ENCODE measurements at regions of chr2 and their contacts with region 1.

Region 1: DNA sequence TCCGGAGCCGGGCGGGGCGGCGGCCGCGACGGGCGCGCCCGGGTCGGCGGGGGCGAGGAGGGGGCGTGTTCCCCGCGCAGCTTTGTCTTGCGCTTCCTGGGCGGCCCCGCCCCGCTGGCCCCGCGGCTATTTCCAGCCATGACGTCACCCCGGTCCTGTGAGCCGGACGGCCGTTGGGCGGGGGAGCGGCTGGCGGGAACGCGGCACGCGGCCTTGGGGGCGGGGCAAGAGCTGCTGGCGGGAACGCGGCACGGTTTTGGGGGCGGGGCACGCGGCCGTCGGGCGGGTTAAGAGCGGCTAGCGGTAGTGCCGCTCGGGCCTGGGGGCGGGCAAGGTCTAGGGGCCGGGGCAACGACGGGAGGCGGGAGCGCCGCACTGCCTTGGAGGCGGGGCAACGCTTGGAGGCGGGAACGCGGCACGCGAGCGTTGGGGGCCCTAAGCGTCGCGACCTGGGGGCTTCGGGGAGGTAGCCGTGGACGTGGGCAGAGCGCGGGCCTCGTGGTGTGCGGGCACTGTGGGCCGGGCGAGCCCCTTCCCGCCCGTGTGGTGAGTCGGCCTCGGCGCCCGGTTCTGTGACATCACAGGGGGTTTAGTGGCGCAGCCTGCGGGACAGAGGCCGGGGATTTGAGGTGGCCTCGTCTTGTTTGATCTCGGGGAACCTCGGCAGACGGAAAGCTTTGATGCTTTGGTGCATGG is 704 bp downstream of the KLF11 start:
- DNase-seq: peak; percentile 72 to 96 (median 94)
- ATAC-seq: peak; percentile 66
- H3K4me3 ChIP-seq: peak overlapping the region; percentile 40 to 47
- H3K4me3 Mint-ChIP-seq: peak overlapping the region; percentile 77
- H3K27ac ChIP-seq: peak overlapping the region; percentile 67 to 74
- H3K27ac Mint-ChIP-seq: peak overlapping the region; percentile 90
- H3K4me1 ChIP-seq: peaks cover 18% of the 10 kb centered on the region
- H3K4me1 Mint-ChIP-seq: peaks cover 21% of the 10 kb centered on the region
- H3K27me3 ChIP-seq: no peaks in the 10 kb centered on the region
- H3K27me3 Mint-ChIP-seq: no peaks in the 10 kb centered on the region
- CTCF ChIP-seq: no peak

Region 2: DNA sequence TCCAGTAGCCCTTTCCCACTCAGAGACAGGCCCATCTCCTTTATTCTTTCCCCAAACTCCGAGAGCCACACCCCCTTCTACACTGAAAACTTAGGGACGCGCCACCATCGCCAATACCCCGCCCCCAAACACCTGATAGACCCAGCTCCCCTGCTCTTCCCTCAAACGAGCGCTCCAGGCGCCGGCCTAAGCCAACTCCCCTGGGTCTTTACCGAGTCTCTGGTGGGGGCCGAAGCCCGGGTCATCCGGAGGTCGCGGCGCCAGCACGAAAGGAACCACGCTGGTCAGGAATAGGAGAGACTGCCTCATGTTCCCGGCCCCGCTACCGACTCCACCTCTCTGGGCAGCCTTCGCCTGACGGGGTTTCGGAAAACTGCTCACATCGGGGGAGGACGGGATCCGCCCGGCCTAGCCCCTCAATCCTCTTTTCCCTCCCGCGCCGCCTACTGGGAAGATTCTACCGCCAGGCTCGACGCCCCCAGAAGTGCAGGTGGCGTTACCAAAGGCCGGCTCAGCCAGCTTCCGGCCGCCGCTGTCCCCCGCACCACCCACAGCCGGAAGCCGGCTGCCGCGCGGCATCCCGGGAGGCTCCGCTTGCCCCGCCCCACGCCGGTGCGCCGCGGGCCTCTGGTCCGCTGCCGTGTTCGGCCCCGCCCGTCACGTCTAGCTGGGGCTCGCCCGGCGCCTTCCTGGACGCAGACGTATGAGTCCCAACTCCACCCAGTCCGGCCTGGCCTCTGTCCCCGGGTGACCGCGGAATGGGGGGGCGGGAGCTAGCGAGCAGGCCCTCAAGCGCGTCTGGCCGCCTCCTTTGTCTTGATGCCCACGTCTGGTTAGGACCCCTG is 488.5 kb before region 1 on chr2 and contains the start of gene ADAM17:
- CTCF ChIA-PET with region 1: no interaction called
- POLR2A ChIA-PET with region 1: no interaction called
- intact Hi-C with region 1: loop called (anchors 2 to 5 kb)
- DNase-seq: peak; percentile 62 to 93 (median 81)
- ATAC-seq: peak; percentile 88
- H3K4me3 ChIP-seq: peak within 1 kb of the TSS; percentile 91 to 96
- H3K4me3 Mint-ChIP-seq: peak within 1 kb of the TSS; percentile 94
- H3K27ac ChIP-seq: peak within 1 kb of the TSS; percentile 93 to 94
- H3K27ac Mint-ChIP-seq: peak within 1 kb of the TSS; percentile 93
- H3K4me1 ChIP-seq: peaks cover 37% of the 10 kb centered on the region
- H3K4me1 Mint-ChIP-seq: peaks cover 49% of the 10 kb centered on the region
- H3K27me3 ChIP-seq: no peaks in the 10 kb centered on the region
- H3K27me3 Mint-ChIP-seq: no peaks in the 10 kb centered on the region
- CTCF ChIP-seq: no peak
- total RNA-seq, gene ADAM17: 20.0 to 25.1 TPM

Region 3: GRCh38 chr2:9813312-9814133 is 230.5 kb before region 1 on chr2:
- CTCF ChIA-PET with region 1: interaction called, 103 read pairs
- POLR2A ChIA-PET with region 1: no interaction called
- intact Hi-C with region 1: loop called (anchors 1 kb)
- DNase-seq: peak; percentile 34 to 79 (median 70)
- ATAC-seq: peak; percentile 89
- H3K4me3 ChIP-seq: no peak overlapping the region
- H3K4me3 Mint-ChIP-seq: no peak overlapping the region
- H3K27ac ChIP-seq: no peak overlapping the region
- H3K27ac Mint-ChIP-seq: no peak overlapping the region
- H3K4me1 ChIP-seq: peaks cover 4% of the 10 kb centered on the region
- H3K4me1 Mint-ChIP-seq: peaks cover 11% of the 10 kb centered on the region
- H3K27me3 ChIP-seq: no peaks in the 10 kb centered on the region
- H3K27me3 Mint-ChIP-seq: peaks cover 3% of the 10 kb centered on the region
- CTCF ChIP-seq: peak; percentile 85

Region 4: DNA sequence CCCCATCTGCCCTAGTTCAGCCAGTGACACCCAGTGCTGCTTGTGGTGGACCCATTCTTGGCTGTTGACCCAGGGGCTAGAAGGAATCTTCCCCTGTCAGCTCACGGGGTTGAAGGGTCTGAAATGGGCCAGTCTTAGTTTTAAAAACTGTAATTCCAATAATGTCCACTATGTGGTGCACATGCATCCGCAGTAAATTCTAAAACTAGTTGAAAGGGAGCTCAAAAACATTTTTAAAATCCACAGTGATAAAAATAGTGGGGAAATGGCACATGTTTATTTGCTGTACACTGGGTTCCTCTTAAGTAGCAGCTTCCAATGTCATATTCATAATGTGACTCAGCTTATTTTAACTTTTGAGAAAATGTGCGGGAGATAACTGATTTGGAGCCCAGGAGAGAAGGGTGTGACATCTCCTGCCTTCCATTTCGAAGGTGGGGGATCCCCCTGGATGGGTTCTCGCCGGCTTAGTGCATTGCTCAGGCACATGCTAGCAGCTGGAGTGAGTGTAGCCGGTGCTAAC is 59.8 kb before region 1 on chr2:
- CTCF ChIA-PET with region 1: interaction called, 279 read pairs
- POLR2A ChIA-PET with region 1: interaction called, 16 read pairs
- intact Hi-C with region 1: loop called (anchors 1 kb)
- DNase-seq: peak in 6 of 9 experiments; percentile 7 to 77 (median 21)
- ATAC-seq: peak; percentile 87
- H3K4me3 ChIP-seq: no peak overlapping the region
- H3K4me3 Mint-ChIP-seq: no peak overlapping the region
- H3K27ac ChIP-seq: no peak overlapping the region
- H3K27ac Mint-ChIP-seq: no peak overlapping the region
- H3K4me1 ChIP-seq: peaks cover 9% of the 10 kb centered on the region
- H3K4me1 Mint-ChIP-seq: peaks cover 11% of the 10 kb centered on the region
- H3K27me3 ChIP-seq: no peaks in the 10 kb centered on the region
- H3K27me3 Mint-ChIP-seq: peaks cover 4% of the 10 kb centered on the region
- CTCF ChIP-seq: peak; percentile 84

Region 5: DNA sequence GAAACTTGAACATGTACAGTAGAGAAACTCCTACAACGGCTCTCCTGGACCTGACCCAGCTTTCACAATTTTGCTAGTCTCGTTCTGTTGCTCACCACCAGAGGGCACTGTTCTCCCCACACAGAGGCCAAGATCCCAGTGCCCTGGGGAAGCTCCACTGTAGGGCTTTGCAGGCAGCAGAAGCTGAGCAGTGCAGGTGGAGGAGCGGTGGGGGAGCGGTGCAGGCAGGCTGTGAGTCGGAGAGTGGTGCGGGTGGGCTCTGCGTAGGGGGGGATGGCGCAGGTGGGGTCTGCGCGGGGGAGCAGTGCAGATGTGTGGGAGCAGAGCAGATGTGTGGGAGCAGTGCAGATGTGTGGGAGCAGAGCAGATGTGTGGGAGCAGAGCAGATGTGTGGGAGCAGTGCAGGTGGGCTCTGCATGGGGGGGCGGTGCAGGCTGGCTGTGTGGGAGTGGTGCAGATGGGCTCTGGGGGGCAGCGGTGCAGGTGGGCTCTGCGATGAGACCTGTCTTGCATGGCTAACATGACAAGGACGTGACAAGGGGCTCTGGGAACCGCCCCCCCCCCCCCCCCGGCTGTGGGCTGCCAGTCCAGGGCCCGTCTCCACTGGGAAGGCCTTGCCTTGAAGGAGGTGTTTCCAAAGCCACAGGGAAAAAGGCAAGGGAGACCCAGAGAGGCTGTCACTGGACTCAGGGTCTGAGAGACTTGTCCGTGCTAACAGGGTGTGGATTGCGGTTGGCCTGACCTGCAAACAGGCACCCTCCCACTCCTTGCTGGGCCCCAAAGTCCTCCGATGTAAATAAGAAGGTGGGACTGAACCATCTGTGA is 28.8 kb after region 1 on chr2:
- CTCF ChIA-PET with region 1: interaction called, 13 read pairs
- POLR2A ChIA-PET with region 1: no interaction called
- intact Hi-C with region 1: no loop called
- DNase-seq: peak; percentile 59 to 89 (median 80)
- ATAC-seq: peak; percentile 97
- H3K4me3 ChIP-seq: no peak overlapping the region
- H3K4me3 Mint-ChIP-seq: no peak overlapping the region
- H3K27ac ChIP-seq: no peak overlapping the region
- H3K27ac Mint-ChIP-seq: no peak overlapping the region
- H3K4me1 ChIP-seq: no peaks in the 10 kb centered on the region
- H3K4me1 Mint-ChIP-seq: peaks cover 4% of the 10 kb centered on the region
- H3K27me3 ChIP-seq: peaks cover 4 to 11% of the 10 kb centered on the region in 2 experiments
- H3K27me3 Mint-ChIP-seq: peaks cover 35% of the 10 kb centered on the region
- CTCF ChIP-seq: peak; percentile 70

Region 6: DNA sequence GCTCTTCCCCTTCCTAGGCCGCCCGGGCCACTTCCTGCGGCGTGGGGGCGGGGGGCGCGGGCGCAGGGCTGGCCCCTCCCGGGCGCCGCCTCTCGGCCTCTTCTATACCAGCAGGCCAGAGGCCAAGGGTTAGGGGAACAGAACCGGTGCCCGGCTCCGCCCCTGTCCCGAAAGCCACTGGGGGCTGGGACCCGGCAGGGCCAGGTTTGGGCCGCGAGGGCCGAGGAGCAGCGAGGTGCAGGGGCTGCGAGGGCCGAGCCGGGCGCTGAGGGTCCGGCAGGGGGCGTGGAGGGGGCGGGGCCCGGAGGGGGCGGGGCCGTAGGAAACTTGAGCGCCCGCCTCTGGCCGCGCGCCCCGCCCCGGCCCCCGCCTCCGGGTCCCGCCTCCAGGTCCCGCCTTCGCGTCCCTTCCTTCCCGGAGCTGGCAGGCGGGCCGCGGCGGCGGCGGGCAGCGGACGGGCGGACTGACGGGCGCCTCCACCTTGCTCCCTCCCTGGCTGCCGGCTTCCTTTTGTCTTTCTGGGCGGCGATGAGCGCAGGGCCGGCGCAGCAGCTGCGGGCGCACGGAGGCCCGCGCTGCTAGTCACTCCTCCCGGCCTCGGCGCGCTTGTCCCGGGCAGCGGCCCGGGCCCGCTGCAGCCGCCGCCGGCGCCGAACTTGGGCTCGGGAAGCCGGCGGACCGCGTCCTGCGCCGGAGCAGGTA is 258.6 kb after region 1 on chr2 and contains the start of gene HPCAL1:
- CTCF ChIA-PET with region 1: no interaction called
- POLR2A ChIA-PET with region 1: interaction called, 4 read pairs
- intact Hi-C with region 1: loop called in 1 of 2 experiments (anchors 10 kb)
- DNase-seq: peak; percentile 54 to 90 (median 80)
- ATAC-seq: peak; percentile 67
- H3K4me3 ChIP-seq: peak within 1 kb of the TSS; percentile 84 to 86
- H3K4me3 Mint-ChIP-seq: peak within 1 kb of the TSS; percentile 98
- H3K27ac ChIP-seq: peak within 1 kb of the TSS; percentile 52 to 73
- H3K27ac Mint-ChIP-seq: peak within 1 kb of the TSS; percentile 92
- H3K4me1 ChIP-seq: peaks cover 60% of the 10 kb centered on the region
- H3K4me1 Mint-ChIP-seq: peaks cover 70% of the 10 kb centered on the region
- H3K27me3 ChIP-seq: no peaks in the 10 kb centered on the region
- H3K27me3 Mint-ChIP-seq: no peaks in the 10 kb centered on the region
- CTCF ChIP-seq: peak; percentile 61
- total RNA-seq, gene HPCAL1: 25.0 to 25.6 TPM

Region 7: DNA sequence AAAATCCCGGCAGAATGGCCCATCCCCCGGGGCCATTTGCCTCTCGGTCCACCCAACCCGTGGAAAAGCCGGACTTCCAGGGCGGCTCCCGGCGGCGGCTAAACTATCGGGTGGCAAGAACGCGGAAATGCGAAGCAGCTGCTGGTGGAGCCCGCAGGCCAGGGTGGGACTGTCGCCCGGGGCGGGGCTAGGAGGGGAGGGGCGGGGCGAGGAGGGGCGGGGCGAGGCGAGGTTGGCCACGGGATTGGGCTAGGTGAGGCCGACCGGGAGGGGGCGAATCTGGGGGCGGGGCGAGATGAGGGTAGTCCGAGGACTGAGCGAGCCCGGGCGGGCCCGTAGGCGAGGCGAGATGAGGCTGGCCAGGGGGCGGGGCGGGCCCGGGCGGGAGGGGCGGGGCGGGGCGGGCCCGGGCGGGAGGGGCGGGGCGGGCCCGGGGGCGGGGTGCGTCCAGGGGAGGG is 1110.9 kb after region 1 on chr2:
- CTCF ChIA-PET with region 1: no interaction called
- POLR2A ChIA-PET with region 1: no interaction called
- intact Hi-C with region 1: loop called in 1 of 2 experiments (anchors 10 kb)
- DNase-seq: peak; percentile 96 to 99 (median 98)
- ATAC-seq: peak; percentile 91
- H3K4me3 ChIP-seq: peak overlapping the region; percentile 55 to 57
- H3K4me3 Mint-ChIP-seq: peak overlapping the region; percentile 80
- H3K27ac ChIP-seq: peak overlapping the region; percentile 68 to 78
- H3K27ac Mint-ChIP-seq: peak overlapping the region; percentile 85
- H3K4me1 ChIP-seq: peaks cover 18% of the 10 kb centered on the region
- H3K4me1 Mint-ChIP-seq: peaks cover 20% of the 10 kb centered on the region
- H3K27me3 ChIP-seq: no peaks in the 10 kb centered on the region
- H3K27me3 Mint-ChIP-seq: no peaks in the 10 kb centered on the region
- CTCF ChIP-seq: no peak

Measured in CD8-positive, alpha-beta T cell (primary cell).